ENCODE measurements at regions of chr4 and their contacts with region 1.

Region 1: DNA sequence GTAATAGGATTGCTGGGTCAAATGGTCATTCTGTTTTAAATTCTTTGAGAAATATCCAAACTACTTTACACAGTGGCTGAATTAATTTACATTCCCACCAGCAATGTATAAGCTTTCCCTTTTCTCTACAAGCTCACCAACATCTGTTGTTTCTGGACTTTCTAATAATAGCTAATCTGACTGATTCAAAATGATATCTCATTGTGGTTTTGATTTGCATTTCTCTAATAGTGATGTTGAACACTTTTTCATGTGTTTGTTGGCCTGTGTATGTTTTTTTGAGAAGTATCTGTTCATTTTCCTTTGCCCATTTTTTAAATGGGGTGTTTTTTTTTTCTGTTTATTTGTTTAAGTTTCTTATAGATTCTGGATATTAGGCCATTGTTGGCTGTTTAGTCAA is 659.0 kb upstream of the GNPDA2 start:
- DNase-seq: no peak
- H3K4me3 ChIP-seq: no peak overlapping the region
- H3K27ac ChIP-seq: no peak overlapping the region
- H3K4me1 ChIP-seq: no peaks in the 10 kb centered on the region
- H3K27me3 ChIP-seq: no peaks in the 10 kb centered on the region
- CTCF ChIP-seq: no peak

Region 2: DNA sequence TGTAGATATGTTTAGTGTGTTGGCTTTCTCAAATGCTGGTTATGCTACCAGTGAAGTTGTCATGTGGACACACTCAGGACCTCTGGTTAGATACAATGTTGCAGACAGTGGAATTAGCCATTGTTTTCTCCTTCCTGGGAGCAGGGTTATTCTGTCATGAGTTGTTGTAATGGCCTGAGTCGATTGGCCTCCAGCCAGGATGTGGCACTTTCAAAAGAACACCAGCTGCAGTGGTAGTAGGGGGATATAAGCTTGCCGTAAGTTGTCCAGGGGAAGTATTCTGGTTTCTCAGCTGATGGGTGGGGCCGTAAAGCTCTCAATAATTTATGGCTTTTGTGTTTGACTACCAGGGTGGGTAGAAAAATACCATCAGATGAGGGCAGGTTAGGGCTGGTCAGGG is 38.6 kb after region 1 on chr4:
- CTCF ChIA-PET with region 1: no interaction called
- POLR2A ChIA-PET with region 1: no interaction called
- intact Hi-C with region 1: no loop called
- DNase-seq: no peak
- H3K4me3 ChIP-seq: no peak overlapping the region
- H3K27ac ChIP-seq: no peak overlapping the region
- H3K4me1 ChIP-seq: no peaks in the 10 kb centered on the region
- H3K27me3 ChIP-seq: no peaks in the 10 kb centered on the region
- CTCF ChIP-seq: no peak

Region 3: DNA sequence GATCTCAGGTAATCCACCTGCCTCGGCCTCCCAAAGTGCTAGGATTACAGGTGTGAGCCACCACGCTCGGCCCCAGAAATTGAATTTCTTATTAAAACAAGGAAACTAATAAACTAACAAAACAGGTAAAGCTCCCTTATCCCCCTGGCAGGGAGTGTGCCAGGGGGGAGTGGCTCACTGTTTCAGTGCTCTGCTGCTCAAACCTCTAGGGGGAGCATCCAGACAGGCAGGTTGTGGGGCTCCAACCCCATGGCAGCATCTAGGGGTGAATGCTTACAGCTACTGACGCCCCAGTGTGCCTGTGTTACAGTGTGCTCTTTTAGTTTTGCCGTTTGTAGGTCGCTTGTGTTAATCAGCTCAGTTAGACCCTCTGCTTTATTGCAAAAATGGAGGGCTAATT is 133.5 kb after region 1 on chr4:
- CTCF ChIA-PET with region 1: no interaction called
- POLR2A ChIA-PET with region 1: interaction called, 15 read pairs
- intact Hi-C with region 1: no loop called
- DNase-seq: no peak
- H3K4me3 ChIP-seq: no peak overlapping the region
- H3K27ac ChIP-seq: no peak overlapping the region
- H3K4me1 ChIP-seq: no peaks in the 10 kb centered on the region
- H3K27me3 ChIP-seq: no peaks in the 10 kb centered on the region
- CTCF ChIP-seq: no peak